T-cell (primary cell): ENCODE measurements at regions of chr11 and their contacts with region 1.

Region 1: DNA sequence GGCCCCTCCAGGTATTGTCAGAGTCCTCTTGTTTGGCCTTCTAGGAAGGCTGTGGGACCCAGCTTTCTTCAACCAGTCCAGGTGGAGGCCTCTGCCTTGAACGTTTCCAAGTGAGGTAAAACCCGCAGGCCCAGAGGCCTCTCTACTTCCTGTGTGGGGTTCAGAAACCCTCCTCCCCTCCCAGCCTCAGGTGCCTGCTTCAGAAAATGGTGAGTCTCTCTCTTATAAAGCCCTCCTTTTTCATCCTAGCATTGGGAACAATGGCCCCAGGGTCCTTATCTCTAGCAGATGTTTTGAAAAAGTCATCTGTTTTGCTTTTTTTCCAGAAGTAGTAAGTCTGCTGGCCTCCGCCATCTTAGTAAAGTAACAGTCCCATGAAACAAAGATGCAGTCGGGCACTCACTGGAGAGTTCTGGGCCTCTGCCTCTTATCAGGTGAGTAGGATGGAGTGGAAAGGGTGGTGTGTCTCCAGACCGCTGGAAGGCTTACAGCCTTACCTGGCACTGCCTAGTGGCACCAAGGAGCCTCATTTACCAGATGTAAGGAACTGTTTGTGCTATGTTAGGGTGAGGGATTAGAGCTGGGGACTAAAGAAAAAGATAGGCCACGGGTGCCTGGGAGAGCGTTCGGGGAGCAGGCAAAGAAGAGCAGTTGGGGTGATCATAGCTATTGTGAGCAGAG is at the start of gene CD3E:
- DNase-seq: peak; percentile 46 to 80 (median 61)
- ATAC-seq: peak; percentile 77 to 85 (median 80)
- H3K4me3 ChIP-seq: peak within 1 kb of the TSS; percentile 87 to 91
- H3K4me3 Mint-ChIP-seq: peak within 1 kb of the TSS; percentile 95 to 99 (median 99)
- H3K27ac ChIP-seq: peak within 1 kb of the TSS; percentile 91
- H3K27ac Mint-ChIP-seq: peak within 1 kb of the TSS; percentile 100
- H3K4me1 ChIP-seq: peaks cover 39 to 59% of the 10 kb centered on the region in 2 experiments
- H3K4me1 Mint-ChIP-seq: peaks cover 75 to 91% (median 84%) of the 10 kb centered on the region in 3 donors
- H3K27me3 ChIP-seq: no peaks in the 10 kb centered on the region
- H3K27me3 Mint-ChIP-seq: no peaks in the 10 kb centered on the region
- total RNA-seq, gene CD3E: 555 to 659 (median 596) TPM

Region 2: DNA sequence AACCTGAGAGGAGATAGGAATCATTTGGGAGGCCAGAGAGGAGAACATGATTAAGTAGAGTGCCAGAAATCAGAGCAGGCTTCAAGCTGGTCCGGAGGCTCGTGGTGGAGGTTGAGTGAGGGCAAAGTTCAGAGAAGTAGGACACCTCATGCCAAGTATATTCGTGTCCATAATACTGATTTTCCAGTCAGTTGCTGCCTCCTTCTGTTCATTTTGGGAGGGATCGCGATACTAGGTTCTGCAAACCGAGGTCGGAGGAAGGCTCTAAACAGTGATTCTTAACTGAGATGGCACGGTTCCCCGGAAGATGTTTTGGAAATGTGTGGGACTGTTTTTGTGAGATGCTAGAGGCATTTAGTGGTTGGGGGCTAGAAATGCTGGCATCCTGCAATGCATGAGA is 13.8 kb before region 1 on chr11:
- CTCF ChIA-PET with region 1: interaction called, 11 to 20 read pairs
- POLR2A ChIA-PET with region 1: no interaction called
- DNase-seq: peak in 18 of 35 experiments; percentile 8 to 74 (median 26)
- ATAC-seq: peak; percentile 60 to 83 (median 70)
- H3K4me3 ChIP-seq: no peak overlapping the region
- H3K4me3 Mint-ChIP-seq: no peak overlapping the region
- H3K27ac ChIP-seq: no peak overlapping the region
- H3K27ac Mint-ChIP-seq: no peak overlapping the region
- H3K4me1 ChIP-seq: peaks cover 0 to 5% of the 10 kb centered on the region in 2 experiments
- H3K4me1 Mint-ChIP-seq: peaks cover 12 to 22% (median 14%) of the 10 kb centered on the region in 3 donors
- H3K27me3 ChIP-seq: no peaks in the 10 kb centered on the region
- H3K27me3 Mint-ChIP-seq: no peaks in the 10 kb centered on the region

Region 3: DNA sequence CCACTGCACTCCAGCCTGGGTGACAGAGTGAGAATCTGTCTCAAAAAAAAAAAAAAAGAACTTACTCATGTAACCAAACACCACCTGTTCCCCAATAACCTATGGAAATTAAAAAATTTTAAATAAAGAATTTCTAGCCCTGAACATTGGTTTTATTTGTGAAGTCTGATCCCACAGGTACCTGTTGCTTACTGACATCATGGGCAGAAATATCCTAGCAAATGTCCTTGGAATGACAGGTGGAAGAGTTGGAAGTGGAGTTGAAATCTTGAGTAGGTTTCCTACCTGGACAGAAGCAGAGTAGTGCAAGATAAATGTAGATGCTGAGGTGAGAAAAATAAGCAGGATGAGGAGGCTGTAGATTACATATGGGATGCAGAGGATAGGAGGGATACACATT is 20.6 kb after region 1 on chr11:
- CTCF ChIA-PET with region 1: no interaction called
- POLR2A ChIA-PET with region 1: no interaction called
- DNase-seq: no peak
- ATAC-seq: no peak
- H3K4me3 ChIP-seq: no peak overlapping the region
- H3K4me3 Mint-ChIP-seq: no peak overlapping the region
- H3K27ac ChIP-seq: no peak overlapping the region
- H3K27ac Mint-ChIP-seq: no peak overlapping the region
- H3K4me1 ChIP-seq: peaks cover 6 to 28% of the 10 kb centered on the region in 2 experiments
- H3K4me1 Mint-ChIP-seq: peaks cover 35 to 60% (median 54%) of the 10 kb centered on the region in 3 donors
- H3K27me3 ChIP-seq: no peaks in the 10 kb centered on the region
- H3K27me3 Mint-ChIP-seq: no peaks in the 10 kb centered on the region